ENCODE measurements at regions of chr6 and their contacts with region 1.

Region 1: DNA sequence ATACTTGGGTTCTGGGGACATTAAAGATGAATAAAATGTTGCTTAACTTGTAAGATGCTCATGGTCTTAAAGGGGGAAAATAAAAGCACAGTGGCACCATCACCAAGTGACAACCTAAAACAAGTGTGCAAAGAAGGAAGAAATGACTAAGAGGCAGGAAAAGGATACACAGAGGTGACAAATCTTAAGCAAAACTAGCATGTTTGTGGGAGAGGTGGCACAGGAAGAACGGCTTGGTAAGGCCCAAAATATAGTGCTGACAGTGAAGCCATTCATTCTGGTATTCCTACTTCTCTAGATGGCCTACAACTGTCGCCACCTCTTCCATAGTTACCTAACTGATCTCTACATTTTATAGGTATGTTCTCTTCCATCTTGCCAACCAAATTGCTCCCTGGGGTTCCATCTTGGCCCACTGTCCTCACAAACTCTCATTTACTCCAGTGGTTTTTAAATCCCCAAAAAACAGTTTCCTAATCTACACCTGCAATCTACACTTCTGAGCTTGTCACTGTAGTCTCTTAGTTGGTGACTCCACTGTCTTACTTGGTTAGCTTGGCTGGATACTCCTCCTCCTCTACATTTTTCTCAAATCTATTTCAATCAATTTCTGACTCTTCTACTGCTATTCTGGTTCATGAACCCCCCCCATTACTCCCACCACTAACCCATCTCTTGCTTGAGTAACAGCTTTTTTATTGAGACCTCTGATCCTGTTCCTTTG is 33.5 kb downstream of the FAM8A1 start:
- DNase-seq: no peak
- ATAC-seq: no peak
- H3K4me3 ChIP-seq: no peak overlapping the region
- H3K27ac ChIP-seq: peak overlapping the region in 1 of 10 donors; percentile 11
- H3K4me1 ChIP-seq: peaks cover 0 to 37% (median 19%) of the 10 kb centered on the region in 9 donors
- H3K27me3 ChIP-seq: no peaks in the 10 kb centered on the region
- CTCF ChIP-seq: no peak

Region 2: GRCh38 chr6:17212546-17213371 is 420.9 kb before region 1 on chr6:
- intact Hi-C with region 1: no loop called
- DNase-seq: peak; percentile 28 to 48
- ATAC-seq: peak; percentile 58 to 95 (median 86)
- H3K4me3 ChIP-seq: peak overlapping the region in 2 of 10 donors; percentile 10 to 11
- H3K27ac ChIP-seq: peak overlapping the region; percentile 21 to 83 (median 62)
- H3K4me1 ChIP-seq: peaks cover 0 to 21% (median 6%) of the 10 kb centered on the region in 9 donors
- H3K27me3 ChIP-seq: no peaks in the 10 kb centered on the region
- CTCF ChIP-seq: no peak

Region 3: DNA sequence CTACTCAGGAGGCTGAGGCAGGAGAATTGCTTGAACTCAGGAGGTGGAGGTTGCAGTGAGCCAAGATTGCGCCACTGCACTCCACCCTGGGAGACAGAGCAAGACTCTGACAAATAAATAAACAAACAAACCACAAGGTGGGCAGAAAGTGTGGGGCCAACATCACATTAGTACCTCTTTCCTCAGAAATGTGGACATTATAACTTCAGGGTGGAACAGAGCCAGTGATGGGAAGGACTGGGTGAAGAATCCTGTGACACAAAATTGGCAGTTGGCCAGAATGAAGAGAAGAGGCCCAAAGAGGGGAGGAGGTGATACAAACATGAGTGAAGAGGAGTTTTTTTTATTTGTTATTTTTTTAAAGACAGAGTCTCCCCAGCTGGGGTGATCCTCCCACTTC is 22.5 kb after region 1 on chr6:
- intact Hi-C with region 1: loop called in 1 of 10 experiments (anchors 1 kb)
- DNase-seq: no peak
- ATAC-seq: peak in 2 of 8 donors; percentile 39 to 45
- H3K4me3 ChIP-seq: no peak overlapping the region
- H3K27ac ChIP-seq: no peak overlapping the region
- H3K4me1 ChIP-seq: peaks cover 0 to 16% (median 6%) of the 10 kb centered on the region in 9 donors
- H3K27me3 ChIP-seq: no peaks in the 10 kb centered on the region
- CTCF ChIP-seq: no peak

Measured in heart right ventricle (tissue), 16 donors.